Psoas muscle (tissue), 8 donors: ENCODE measurements at regions of chr7 and their contacts with region 1.

Region 1: GRCh38 chr7:8217200-8218068 is 44.5 kb downstream of the ICA1 start:
- DNase-seq: no peak
- ATAC-seq: peak; percentile 62 to 79 (median 65)
- H3K4me3 ChIP-seq: no peak overlapping the region
- H3K27ac ChIP-seq: no peak overlapping the region
- H3K4me1 ChIP-seq: no peaks in the 10 kb centered on the region
- H3K27me3 ChIP-seq: no peaks in the 10 kb centered on the region
- CTCF ChIP-seq: peak; percentile 78

Region 2: DNA sequence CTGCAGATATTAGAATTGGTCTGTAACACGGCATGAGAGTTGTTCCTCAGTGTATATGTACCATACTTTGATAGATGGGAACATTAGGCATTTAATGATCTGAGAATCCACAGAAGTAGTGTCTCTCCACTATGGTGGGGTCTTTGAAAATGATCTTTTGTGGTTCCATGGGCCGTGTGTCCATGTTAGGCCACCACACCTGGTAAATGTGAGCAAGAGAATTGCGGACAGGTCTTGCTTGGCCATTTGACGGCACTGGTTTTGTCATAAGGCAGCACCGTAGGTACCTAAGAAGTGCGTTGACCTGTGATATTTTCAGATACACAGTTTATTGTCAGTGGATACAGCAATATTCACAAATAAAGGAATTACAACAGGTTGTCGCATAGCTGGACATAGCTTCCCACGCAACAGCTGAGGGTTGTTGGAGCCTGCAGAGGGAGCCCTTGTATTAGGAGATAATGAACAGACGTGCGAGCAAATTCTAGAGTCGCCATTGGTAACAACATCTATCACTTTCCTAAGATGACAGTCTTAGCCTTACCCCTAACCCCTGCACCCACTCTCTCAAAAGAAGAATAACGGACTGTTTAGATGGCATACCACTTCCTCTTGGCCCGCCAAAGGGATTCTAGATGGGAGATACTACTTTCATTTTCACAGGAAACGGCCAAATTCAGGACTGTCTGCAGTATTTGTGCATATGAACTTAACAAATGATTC is 793.1 kb before region 1 on chr7:
- intact Hi-C with region 1: loop called (anchors 5 to 10 kb)
- DNase-seq: peak; percentile 37 to 59
- ATAC-seq: peak; percentile 76 to 98 (median 90)
- H3K4me3 ChIP-seq: peak overlapping the region; percentile 49
- H3K27ac ChIP-seq: no peak overlapping the region
- H3K4me1 ChIP-seq: no peaks in the 10 kb centered on the region
- H3K27me3 ChIP-seq: no peaks in the 10 kb centered on the region
- CTCF ChIP-seq: peak; percentile 74

Region 3: DNA sequence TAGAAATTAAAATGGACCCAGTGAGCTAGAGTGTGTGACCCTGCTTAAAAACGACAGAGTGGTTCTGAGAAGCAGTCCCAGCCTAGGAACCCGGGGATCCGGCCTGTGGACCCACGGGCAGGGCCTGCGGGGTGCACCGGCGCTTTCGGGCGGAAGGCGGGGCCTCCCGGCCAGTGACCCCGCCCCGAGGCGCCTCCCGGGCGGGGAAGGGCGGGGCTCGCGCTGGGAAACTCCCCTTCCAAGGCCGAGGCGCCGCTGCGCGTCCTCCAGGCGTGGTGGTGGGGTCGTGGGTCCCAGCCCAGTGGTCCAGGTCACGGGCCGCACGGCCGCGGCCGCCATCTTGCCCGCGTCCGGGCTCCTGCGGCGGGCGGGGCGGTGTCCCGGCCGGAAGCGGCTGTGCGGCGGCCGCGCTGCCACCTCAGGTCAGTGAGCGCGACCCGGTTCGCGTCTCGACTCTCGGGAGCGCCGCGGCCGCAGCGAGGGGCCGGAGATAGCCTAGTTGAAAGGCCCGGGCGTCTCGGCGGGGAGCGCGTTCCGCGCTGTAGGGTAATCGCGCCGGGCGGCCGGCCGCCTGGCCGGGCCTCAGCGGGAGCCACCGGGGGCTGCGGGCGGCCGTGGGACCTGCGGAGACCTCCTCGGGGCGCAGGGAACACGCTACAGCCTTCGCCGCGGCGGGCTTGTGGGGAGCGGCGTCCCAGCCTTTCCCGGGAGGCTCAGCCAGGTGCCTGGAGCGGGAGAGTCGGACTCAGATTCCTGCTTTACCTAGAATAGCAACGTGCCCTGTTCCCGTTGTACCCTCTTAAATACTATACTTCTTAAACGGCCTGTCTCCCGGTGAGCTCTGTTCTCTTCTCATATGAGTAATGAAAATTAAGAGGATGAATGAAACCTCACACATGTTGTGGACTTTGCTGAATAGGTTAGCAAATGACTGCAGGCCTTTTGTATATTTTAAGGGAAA is 650.5 kb before region 1 on chr7 and contains the start of gene MIOS:
- intact Hi-C with region 1: loop called in 1 of 2 experiments (anchors 10 kb)
- DNase-seq: peak; percentile 91 to 95
- ATAC-seq: peak; percentile 89 to 94 (median 91)
- H3K4me3 ChIP-seq: peak within 1 kb of the TSS; percentile 92
- H3K27ac ChIP-seq: peak within 1 kb of the TSS; percentile 97
- H3K4me1 ChIP-seq: peaks cover 39% of the 10 kb centered on the region
- H3K27me3 ChIP-seq: no peaks in the 10 kb centered on the region
- CTCF ChIP-seq: no peak
- total RNA-seq, gene MIOS: 65.5 to 219 (median 105) TPM

Region 4: GRCh38 chr7:7761340-7761980 is 456.0 kb before region 1 on chr7:
- intact Hi-C with region 1: loop called (anchors 5 to 10 kb)
- DNase-seq: no peak
- ATAC-seq: peak; percentile 61 to 87 (median 70)
- H3K4me3 ChIP-seq: peak overlapping the region; percentile 60
- H3K27ac ChIP-seq: peak overlapping the region; percentile 25
- H3K4me1 ChIP-seq: peaks cover 19% of the 10 kb centered on the region
- H3K27me3 ChIP-seq: no peaks in the 10 kb centered on the region
- CTCF ChIP-seq: peak; percentile 63

Region 5: GRCh38 chr7:7911371-7912155 is 305.9 kb before region 1 on chr7:
- intact Hi-C with region 1: no loop called
- DNase-seq: no peak
- ATAC-seq: no peak
- H3K4me3 ChIP-seq: no peak overlapping the region
- H3K27ac ChIP-seq: peak overlapping the region; percentile 58
- H3K4me1 ChIP-seq: peaks cover 16% of the 10 kb centered on the region
- H3K27me3 ChIP-seq: no peaks in the 10 kb centered on the region
- CTCF ChIP-seq: no peak

Region 6: DNA sequence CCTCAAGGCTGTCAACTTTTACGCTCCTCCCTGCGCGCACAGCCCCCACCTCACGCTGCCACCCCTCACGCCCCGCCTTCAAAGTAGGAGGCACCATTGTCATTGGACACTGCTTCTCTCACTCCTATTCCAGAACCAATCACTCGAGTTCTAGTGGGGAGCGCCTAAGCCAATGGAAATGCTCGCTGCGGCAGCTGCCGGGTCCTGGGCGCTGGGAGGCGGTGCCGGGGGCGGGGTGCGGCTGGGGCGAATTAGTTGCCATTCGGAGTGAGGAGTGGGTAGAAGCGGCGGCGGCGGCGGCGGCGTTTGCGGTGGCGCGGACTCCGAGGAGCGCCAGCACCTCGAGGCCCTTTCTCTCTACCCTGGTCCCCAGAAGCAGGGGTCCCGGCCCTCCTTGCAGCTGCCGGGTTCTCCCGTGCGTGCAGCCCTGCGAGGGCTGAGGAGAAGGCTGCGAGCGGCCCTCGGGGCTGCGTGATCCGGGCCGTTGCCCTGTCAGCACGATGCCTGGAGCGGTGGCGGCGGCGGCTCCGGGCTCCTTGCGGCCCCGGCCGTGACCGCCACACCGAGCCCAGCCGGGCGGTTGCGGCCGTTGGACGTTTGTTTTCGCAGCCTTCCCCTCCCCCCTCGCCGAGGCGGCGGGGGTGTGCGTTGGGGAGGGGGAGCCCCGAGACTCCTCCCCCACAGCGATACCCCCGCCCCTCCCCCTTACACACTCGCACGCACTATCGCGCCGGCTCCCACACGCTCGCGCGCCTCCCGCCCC is 248.7 kb before region 1 on chr7 and contains the start of gene GLCCI1:
- intact Hi-C with region 1: loop called in 1 of 2 experiments (anchors 10 kb)
- DNase-seq: peak; percentile 95 to 97
- ATAC-seq: peak; percentile 98 to 99 (median 99)
- H3K4me3 ChIP-seq: peak within 1 kb of the TSS; percentile 99
- H3K27ac ChIP-seq: peak within 1 kb of the TSS; percentile 96
- H3K4me1 ChIP-seq: peaks cover 15% of the 10 kb centered on the region
- H3K27me3 ChIP-seq: no peaks in the 10 kb centered on the region
- CTCF ChIP-seq: no peak
- total RNA-seq, gene GLCCI1: 2.8 to 8.0 (median 4.1) TPM

Region 7: DNA sequence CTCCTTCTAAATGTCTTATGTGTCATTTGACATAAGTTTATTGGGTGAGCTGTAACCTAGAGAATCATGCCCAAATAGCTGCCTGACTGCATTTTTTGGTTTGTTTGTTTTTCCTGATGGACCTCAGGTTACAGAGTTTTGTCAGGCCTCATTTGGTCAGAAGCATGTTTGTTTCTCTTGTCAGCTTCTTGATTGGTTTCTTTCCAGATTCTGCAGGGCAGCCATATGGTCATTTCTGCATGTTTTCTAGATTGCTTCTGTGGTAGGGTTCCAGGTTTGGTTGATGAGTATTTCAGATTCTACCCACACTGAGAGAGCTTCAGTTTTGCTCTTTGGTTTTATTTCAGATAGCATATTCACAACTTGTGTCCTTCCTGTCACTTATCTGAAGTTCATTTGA is 220.9 kb before region 1 on chr7:
- intact Hi-C with region 1: no loop called
- DNase-seq: no peak
- ATAC-seq: no peak
- H3K4me3 ChIP-seq: no peak overlapping the region
- H3K27ac ChIP-seq: no peak overlapping the region
- H3K4me1 ChIP-seq: peaks cover 10% of the 10 kb centered on the region
- H3K27me3 ChIP-seq: no peaks in the 10 kb centered on the region
- CTCF ChIP-seq: no peak